CD8-positive, alpha-beta T cell (primary cell): ENCODE measurements at regions of chr2 and their contacts with region 1.

Region 1: DNA sequence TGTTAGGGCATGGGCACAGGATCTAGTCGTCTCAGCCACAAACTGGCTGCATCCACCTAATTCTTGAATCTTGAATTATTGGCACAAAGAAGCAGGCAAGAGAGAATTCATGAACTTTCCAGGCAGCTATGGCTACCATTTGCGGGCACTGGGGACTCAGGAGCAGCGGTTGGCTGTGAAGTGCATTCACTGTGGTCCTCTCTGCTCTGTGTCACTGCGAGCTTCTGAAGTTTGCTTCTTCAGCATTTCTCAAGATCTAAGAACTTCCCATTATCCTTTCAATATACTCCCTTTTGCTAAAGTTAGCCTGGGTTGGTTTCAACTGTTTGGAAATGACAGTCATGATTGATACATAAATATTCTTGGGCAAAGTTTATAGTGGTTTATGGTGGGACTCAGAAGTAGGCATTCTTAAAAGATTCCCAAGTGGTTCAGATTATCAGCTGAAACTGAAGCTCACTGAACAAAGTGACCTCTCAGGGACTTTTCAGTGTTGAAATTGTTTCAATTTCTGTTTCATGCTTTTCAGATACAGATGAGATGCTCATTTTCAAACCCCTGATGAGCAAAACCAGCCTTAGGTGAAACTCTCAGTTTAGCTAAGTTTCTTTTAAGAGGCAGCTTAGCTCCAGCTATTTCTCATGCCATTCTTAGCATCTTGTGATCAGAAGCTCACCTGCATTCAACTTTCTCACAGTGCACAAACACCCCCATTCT is 1258.3 kb upstream of the GYPC start:
- DNase-seq: no peak
- ATAC-seq: no peak
- H3K4me3 ChIP-seq: no peak overlapping the region
- H3K4me3 Mint-ChIP-seq: no peak overlapping the region
- H3K27ac ChIP-seq: no peak overlapping the region
- H3K27ac Mint-ChIP-seq: no peak overlapping the region
- H3K4me1 ChIP-seq: no peaks in the 10 kb centered on the region
- H3K4me1 Mint-ChIP-seq: no peaks in the 10 kb centered on the region
- H3K27me3 ChIP-seq: no peaks in the 10 kb centered on the region
- H3K27me3 Mint-ChIP-seq: no peaks in the 10 kb centered on the region
- CTCF ChIP-seq: no peak

Region 2: GRCh38 chr2:124911560-124911959 is 486.1 kb before region 1 on chr2:
- CTCF ChIA-PET with region 1: no interaction called
- POLR2A ChIA-PET with region 1: no interaction called
- intact Hi-C with region 1: no loop called
- DNase-seq: no peak
- ATAC-seq: no peak
- H3K4me3 ChIP-seq: no peak overlapping the region
- H3K4me3 Mint-ChIP-seq: no peak overlapping the region
- H3K27ac ChIP-seq: no peak overlapping the region
- H3K27ac Mint-ChIP-seq: no peak overlapping the region
- H3K4me1 ChIP-seq: no peaks in the 10 kb centered on the region
- H3K4me1 Mint-ChIP-seq: no peaks in the 10 kb centered on the region
- H3K27me3 ChIP-seq: no peaks in the 10 kb centered on the region
- H3K27me3 Mint-ChIP-seq: no peaks in the 10 kb centered on the region
- CTCF ChIP-seq: no peak

Region 3: GRCh38 chr2:125207431-125207830 is 190.3 kb before region 1 on chr2:
- CTCF ChIA-PET with region 1: no interaction called
- POLR2A ChIA-PET with region 1: no interaction called
- intact Hi-C with region 1: no loop called
- DNase-seq: no peak
- ATAC-seq: no peak
- H3K4me3 ChIP-seq: no peak overlapping the region
- H3K4me3 Mint-ChIP-seq: no peak overlapping the region
- H3K27ac ChIP-seq: no peak overlapping the region
- H3K27ac Mint-ChIP-seq: no peak overlapping the region
- H3K4me1 ChIP-seq: no peaks in the 10 kb centered on the region
- H3K4me1 Mint-ChIP-seq: no peaks in the 10 kb centered on the region
- H3K27me3 ChIP-seq: no peaks in the 10 kb centered on the region
- H3K27me3 Mint-ChIP-seq: no peaks in the 10 kb centered on the region
- CTCF ChIP-seq: no peak

Region 4: GRCh38 chr2:125318740-125319139 is 79.0 kb before region 1 on chr2:
- CTCF ChIA-PET with region 1: no interaction called
- POLR2A ChIA-PET with region 1: no interaction called
- intact Hi-C with region 1: loop called in 1 of 2 experiments (anchors 2 kb)
- DNase-seq: no peak
- ATAC-seq: no peak
- H3K4me3 ChIP-seq: no peak overlapping the region
- H3K4me3 Mint-ChIP-seq: no peak overlapping the region
- H3K27ac ChIP-seq: no peak overlapping the region
- H3K27ac Mint-ChIP-seq: no peak overlapping the region
- H3K4me1 ChIP-seq: no peaks in the 10 kb centered on the region
- H3K4me1 Mint-ChIP-seq: no peaks in the 10 kb centered on the region
- H3K27me3 ChIP-seq: no peaks in the 10 kb centered on the region
- H3K27me3 Mint-ChIP-seq: no peaks in the 10 kb centered on the region
- CTCF ChIP-seq: no peak

Region 5: DNA sequence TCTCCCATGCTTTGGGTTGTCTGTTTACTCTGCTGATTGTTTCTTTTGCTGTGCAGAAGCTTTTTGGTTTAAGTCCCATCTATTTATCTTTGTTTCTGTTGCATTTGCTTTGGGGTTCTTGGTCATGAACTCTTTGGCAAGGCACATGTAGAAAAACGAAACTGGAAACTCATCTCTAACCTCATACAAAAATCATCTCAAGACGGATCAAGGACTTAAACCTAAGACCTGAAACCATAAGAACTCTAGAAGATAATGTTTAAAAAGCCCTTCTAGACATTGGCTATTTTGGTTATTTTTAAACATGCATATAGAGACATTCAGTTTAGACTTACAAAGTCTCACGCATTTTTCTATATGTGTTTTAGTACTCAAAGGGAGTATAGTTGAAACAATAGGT is 94.0 kb after region 1 on chr2:
- CTCF ChIA-PET with region 1: no interaction called
- POLR2A ChIA-PET with region 1: no interaction called
- intact Hi-C with region 1: no loop called
- DNase-seq: no peak
- ATAC-seq: no peak
- H3K4me3 ChIP-seq: no peak overlapping the region
- H3K4me3 Mint-ChIP-seq: no peak overlapping the region
- H3K27ac ChIP-seq: no peak overlapping the region
- H3K27ac Mint-ChIP-seq: no peak overlapping the region
- H3K4me1 ChIP-seq: no peaks in the 10 kb centered on the region
- H3K4me1 Mint-ChIP-seq: no peaks in the 10 kb centered on the region
- H3K27me3 ChIP-seq: no peaks in the 10 kb centered on the region
- H3K27me3 Mint-ChIP-seq: no peaks in the 10 kb centered on the region
- CTCF ChIP-seq: no peak